IMR-90 (cell line): ENCODE measurements at regions of chr21 and their contacts with region 1.

Region 1: DNA sequence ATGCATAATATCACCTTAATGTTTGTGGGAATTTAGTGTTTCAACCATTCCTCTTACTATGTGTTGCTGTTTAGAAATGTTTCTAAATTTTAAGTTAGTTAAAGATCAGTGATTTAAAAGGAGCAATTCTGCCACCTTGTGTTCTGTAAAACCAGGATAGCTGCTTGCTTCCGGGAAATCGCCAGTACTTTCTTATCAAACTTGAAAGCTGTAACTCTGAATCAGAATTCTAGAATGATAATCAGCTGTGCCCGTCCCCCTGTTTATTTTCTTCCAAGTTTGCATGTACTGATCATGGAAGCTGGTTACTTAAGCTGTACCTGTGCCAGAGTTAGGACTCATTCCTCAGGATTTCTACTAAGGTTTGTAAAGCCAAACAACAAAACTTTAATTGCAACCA is 656.4 kb downstream of the LTN1 start:
- DNase-seq: peak; percentile 96
- ATAC-seq: peak; percentile 66
- H3K4me3 ChIP-seq: no peak overlapping the region
- H3K27ac ChIP-seq: peak overlapping the region; percentile 74; the same call in 1 of the 2 replicates
- H3K4me1 ChIP-seq: peaks cover 11% of the 10 kb centered on the region
- H3K27me3 ChIP-seq: no peaks in the 10 kb centered on the region
- CTCF ChIP-seq: peak; percentile 71
- POLR2A ChIP-seq: no peak
- RAD21 ChIP-seq: peak; percentile 76

Region 2: DNA sequence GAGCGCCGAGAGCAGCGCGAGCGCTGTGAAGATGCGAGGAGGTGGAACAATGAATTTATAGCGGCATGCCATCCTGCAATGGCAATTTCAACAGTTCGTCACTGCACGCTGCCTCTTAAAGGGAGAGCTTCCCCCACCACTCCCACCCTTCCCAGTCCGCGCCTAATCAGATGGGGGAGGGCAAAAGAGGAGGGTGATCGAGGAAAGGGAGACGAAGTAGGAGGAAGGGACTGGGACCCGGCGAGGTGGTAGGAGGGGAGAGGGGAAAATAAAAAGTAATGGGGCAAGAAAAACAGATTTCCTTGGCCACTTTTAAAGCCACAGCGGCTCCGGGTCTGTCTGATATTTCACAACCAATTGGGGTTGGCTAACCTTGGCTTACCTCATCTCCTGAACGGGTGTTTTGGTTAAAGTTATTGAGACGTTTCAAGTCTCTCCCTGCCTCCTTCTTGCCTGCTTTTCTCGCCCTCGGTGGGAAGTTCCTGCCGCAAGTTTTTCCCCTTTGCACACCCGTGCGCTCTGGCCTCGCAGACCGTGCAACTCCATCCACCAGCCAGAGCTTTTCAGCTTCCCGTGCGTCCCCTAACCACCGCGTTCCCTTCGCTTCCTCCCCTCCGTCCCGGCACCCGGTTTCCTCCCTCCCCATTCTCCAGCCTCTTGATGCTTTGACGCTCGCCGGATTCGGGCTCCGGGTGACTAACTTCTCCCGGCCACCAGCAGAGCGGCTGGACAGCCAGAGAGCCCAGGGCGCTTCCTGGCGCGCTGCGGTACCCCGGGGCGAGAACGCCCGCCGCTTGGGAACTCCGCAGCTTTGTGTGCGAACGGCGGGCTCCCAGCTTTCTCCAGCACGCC is 1369.0 kb before region 1 on chr21 and contains the start of gene ADAMTS5:
- CTCF ChIA-PET with region 1: interaction called, 4 read pairs
- POLR2A ChIA-PET with region 1: no interaction called
- dilution Hi-C with region 1: no loop called
- in situ Hi-C with region 1: no loop called
- intact Hi-C with region 1: loop called (anchors 2 kb)
- DNase-seq: peak; percentile 69
- ATAC-seq: peak; percentile 61
- H3K4me3 ChIP-seq: peak within 1 kb of the TSS; percentile 65
- H3K27ac ChIP-seq: peak within 1 kb of the TSS; percentile 80
- H3K4me1 ChIP-seq: no peaks in the 10 kb centered on the region; the same call in 1 of the 2 replicates
- H3K27me3 ChIP-seq: no peaks in the 10 kb centered on the region
- CTCF ChIP-seq: 0 out of 2 replicates have a peak, but pooled peaks have one; percentile 4
- POLR2A ChIP-seq: peak; percentile 65
- RAD21 ChIP-seq: no peak; the same call in 1 of the 2 replicates
- total RNA-seq, gene ADAMTS5: 0.54 and 1.1 TPM in 2 replicates

Region 3: DNA sequence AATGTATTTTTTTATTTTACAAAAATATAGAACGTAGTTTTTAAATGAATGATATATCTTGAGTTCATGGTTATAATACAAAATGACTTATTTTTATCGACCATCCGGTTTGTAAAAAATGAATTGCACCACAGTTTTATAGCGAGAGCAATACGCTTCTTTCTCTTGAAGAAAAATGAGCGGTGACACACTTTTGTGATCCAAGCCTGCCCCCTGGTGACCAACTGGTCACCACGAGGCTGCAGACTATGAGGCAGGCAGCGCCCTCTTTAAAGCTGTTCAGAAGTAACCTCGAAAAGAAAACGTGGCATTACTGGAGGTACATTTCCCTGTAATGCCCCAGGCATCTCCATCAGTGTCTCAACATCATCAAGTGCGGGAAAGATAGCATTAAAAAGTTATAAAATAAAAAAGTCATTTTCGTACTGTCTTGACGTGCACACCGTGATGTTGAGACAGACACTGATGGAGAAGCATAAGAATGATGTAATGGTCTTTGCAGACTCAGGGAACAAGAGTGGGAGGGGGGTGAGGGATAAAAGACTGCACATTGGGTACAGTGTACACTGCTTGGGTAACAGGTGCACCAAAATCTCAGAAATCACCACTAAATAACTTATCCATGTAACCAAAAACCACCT is 635.2 kb before region 1 on chr21:
- CTCF ChIA-PET with region 1: interaction called, 5 read pairs
- POLR2A ChIA-PET with region 1: no interaction called
- dilution Hi-C with region 1: no loop called
- in situ Hi-C with region 1: loop called (anchors 5 kb)
- intact Hi-C with region 1: loop called (anchors 1 kb)
- DNase-seq: peak; percentile 88
- ATAC-seq: peak; percentile 96
- H3K4me3 ChIP-seq: no peak overlapping the region
- H3K27ac ChIP-seq: no peak overlapping the region
- H3K4me1 ChIP-seq: no peaks in the 10 kb centered on the region
- H3K27me3 ChIP-seq: no peaks in the 10 kb centered on the region
- CTCF ChIP-seq: peak; percentile 98
- POLR2A ChIP-seq: peak; percentile 53; the same call in 1 of the 2 replicates
- RAD21 ChIP-seq: peak; percentile 99

Region 4: GRCh38 chr21:28111151-28111619 is 225.1 kb before region 1 on chr21:
- CTCF ChIA-PET with region 1: no interaction called
- POLR2A ChIA-PET with region 1: no interaction called
- dilution Hi-C with region 1: no loop called
- in situ Hi-C with region 1: no loop called
- intact Hi-C with region 1: loop called (anchors 5 kb)
- DNase-seq: peak; percentile 92
- ATAC-seq: peak; percentile 96
- H3K4me3 ChIP-seq: peak overlapping the region; percentile 2; the same call in 1 of the 2 replicates
- H3K27ac ChIP-seq: peak overlapping the region; percentile 92
- H3K4me1 ChIP-seq: peaks cover 4% of the 10 kb centered on the region; the same call in 1 of the 2 replicates
- H3K27me3 ChIP-seq: no peaks in the 10 kb centered on the region
- CTCF ChIP-seq: no peak
- POLR2A ChIP-seq: no peak
- RAD21 ChIP-seq: no peak

Region 5: DNA sequence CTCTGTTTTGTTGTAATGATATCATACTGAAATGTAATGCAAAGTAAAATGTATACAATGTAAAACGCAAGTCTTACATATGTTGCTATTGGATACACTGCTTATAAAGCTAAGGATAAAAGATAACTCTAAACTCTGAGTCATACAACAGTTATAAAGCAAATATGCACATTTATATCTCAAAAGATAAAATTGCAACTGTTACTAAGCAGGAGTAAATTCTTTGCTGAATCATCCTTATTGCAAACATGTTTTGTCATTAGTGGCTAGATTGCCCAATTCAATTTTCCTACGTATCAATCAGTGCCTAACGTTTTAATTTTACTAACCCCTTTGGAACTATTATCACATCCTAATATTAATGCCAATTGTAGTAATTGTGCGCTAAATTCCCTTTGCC is 106.5 kb before region 1 on chr21:
- CTCF ChIA-PET with region 1: no interaction called
- POLR2A ChIA-PET with region 1: no interaction called
- dilution Hi-C with region 1: no loop called
- in situ Hi-C with region 1: no loop called
- intact Hi-C with region 1: loop called (anchors 2 kb)
- DNase-seq: peak; percentile 93
- ATAC-seq: peak; percentile 64
- H3K4me3 ChIP-seq: no peak overlapping the region
- H3K27ac ChIP-seq: peak overlapping the region; percentile 91; the same call in 1 of the 2 replicates
- H3K4me1 ChIP-seq: peaks cover 12% of the 10 kb centered on the region
- H3K27me3 ChIP-seq: no peaks in the 10 kb centered on the region
- CTCF ChIP-seq: no peak
- POLR2A ChIP-seq: no peak
- RAD21 ChIP-seq: no peak

Region 6: DNA sequence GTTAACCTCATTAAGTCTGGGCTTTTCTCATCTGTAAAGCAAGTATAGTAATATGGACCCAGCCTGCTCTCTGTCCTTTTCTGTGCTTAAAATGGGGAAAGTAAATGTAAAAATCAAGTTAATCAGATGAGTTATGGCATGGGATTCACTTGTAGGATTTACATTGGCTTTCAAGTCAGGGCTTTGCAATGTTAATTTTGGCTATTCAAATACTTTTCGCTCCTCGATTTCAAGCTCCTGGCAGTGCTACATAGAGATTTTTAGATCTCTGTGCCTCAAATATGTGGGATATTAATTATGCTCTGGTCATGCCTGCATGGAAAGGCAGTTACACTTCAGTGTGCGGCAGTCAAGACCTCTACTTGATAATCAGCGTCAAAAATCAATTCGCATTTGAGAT is 53.5 kb before region 1 on chr21:
- CTCF ChIA-PET with region 1: no interaction called
- POLR2A ChIA-PET with region 1: no interaction called
- dilution Hi-C with region 1: no loop called
- in situ Hi-C with region 1: no loop called
- intact Hi-C with region 1: no loop called
- DNase-seq: no peak
- ATAC-seq: no peak
- H3K4me3 ChIP-seq: no peak overlapping the region
- H3K27ac ChIP-seq: peak overlapping the region; percentile 3; the same call in 1 of the 2 replicates
- H3K4me1 ChIP-seq: no peaks in the 10 kb centered on the region; the same call in 1 of the 2 replicates
- H3K27me3 ChIP-seq: no peaks in the 10 kb centered on the region
- CTCF ChIP-seq: no peak
- POLR2A ChIP-seq: no peak
- RAD21 ChIP-seq: no peak

Region 7: GRCh38 chr21:28793043-28793442 is 456.7 kb after region 1 on chr21:
- CTCF ChIA-PET with region 1: no interaction called
- POLR2A ChIA-PET with region 1: no interaction called
- dilution Hi-C with region 1: no loop called
- in situ Hi-C with region 1: loop called (anchors 10 kb)
- intact Hi-C with region 1: loop called (anchors 2 kb)
- DNase-seq: peak; percentile 73
- ATAC-seq: peak; percentile 85
- H3K4me3 ChIP-seq: no peak overlapping the region
- H3K27ac ChIP-seq: no peak overlapping the region
- H3K4me1 ChIP-seq: peaks cover 9% of the 10 kb centered on the region
- H3K27me3 ChIP-seq: no peaks in the 10 kb centered on the region
- CTCF ChIP-seq: peak; percentile 75
- POLR2A ChIP-seq: no peak
- RAD21 ChIP-seq: peak; percentile 85